ENCODE measurements at regions of chr12 and their contacts with region 1.

Region 1: DNA sequence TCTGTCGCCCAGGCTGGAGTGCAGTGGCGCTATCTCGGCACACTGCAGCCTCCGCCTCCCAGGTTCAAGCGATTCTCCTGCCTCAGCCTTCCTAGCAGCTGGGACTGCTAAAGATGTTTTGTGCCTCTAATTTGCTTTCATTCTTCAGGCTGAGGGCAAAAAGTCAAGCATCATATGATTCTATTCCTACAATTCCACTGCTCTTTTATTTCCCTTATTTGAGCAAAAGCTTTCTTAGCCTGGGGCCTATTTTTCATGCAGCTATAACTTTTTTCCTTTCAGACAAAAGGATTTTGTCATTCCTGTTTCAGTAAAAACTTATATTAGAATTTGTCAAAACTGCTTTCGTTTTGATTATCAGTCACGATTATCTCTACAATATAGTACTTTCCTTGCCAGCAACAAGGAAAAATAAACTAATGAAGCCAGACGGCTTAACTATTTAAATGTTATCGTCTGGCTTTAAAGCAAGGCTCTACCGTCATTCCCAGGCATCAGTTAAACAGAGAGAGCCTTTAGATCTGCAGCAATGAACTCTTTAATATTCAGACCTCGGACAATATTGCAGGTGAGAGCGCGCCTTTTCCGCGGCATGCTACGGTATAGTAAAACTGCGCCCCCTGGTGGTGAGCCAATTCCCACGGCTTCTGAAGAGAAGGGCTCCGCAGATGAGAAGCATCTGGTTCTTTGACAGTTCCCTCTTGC is 1.4 kb upstream of the SLC2A13 start:
- DNase-seq: peak; percentile 94
- H3K4me3 Mint-ChIP-seq: peak overlapping the region; percentile 53
- H3K27ac Mint-ChIP-seq: no peak overlapping the region
- H3K4me1 Mint-ChIP-seq: peaks cover 37% of the 10 kb centered on the region
- H3K27me3 Mint-ChIP-seq: no peaks in the 10 kb centered on the region

Region 2: DNA sequence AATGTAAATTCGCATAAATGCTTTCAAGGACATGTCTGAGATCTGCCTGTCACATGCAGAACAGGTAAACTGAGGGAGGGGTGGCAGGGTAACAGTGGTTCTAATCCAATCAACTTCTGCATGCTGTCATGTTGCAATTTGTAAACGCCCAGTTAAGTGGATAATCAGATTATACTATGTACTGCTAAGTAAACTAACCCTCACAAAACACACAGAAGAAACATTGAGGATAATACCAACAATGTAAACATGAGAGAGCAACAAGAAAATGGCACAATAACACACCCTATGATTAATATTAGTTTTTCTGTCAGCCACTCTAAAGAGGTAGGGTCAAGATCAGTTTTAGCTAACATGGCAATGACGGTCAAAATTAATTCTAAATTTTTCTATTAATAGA is 788.1 kb before region 1 on chr12:
- CTCF ChIA-PET with region 1: interaction called, 3 read pairs
- intact Hi-C with region 1: loop called (anchors 2 kb)
- DNase-seq: no peak
- H3K4me3 Mint-ChIP-seq: no peak overlapping the region
- H3K27ac Mint-ChIP-seq: no peak overlapping the region
- H3K4me1 Mint-ChIP-seq: no peaks in the 10 kb centered on the region
- H3K27me3 Mint-ChIP-seq: no peaks in the 10 kb centered on the region

Region 3: DNA sequence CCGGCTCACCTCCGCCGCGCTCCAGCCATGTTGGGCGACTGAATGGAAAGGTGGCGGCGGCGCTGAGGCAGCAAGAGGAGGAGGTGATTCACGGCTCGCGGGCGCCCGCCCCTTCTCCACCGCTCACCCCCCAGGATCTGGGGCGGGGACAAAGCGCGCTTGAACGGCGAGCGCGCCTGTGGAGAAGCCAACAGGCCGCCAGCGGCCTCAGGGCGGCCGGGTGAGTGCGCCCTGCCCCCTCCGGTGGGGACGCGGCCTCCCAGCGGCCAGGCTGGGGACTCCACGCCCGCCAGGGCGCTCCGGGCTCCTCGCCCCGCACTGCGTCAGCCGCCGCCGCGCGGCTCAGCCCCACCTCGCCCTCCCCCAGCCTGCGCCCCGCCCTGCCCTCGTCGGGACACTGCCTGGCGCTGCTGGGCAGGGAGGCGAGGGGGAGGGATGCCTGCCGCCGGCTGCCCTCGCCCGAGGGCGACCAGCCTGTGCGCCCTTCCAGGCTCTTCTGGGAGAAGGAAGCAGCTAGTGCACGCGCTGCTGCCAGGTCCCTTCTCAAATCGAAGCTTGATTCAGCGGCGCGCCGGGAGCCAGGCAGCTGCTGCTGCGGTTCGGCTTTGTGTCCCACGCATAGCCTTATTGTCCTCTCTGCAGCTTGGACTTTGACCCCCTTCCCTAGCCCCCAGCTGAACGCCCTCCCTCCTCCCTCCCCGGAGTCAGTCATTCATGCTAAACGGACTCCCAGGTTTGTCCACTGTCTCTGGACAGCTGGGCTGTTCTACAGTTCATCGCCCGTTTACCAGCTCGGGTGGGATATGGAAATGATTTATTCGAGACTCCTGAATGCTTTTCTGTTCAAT is 663.9 kb before region 1 on chr12 and contains the start of gene KIF21A:
- CTCF ChIA-PET with region 1: no interaction called
- intact Hi-C with region 1: loop called (anchors 2 kb)
- DNase-seq: peak; percentile 86
- H3K4me3 Mint-ChIP-seq: peak within 1 kb of the TSS; percentile 85
- H3K27ac Mint-ChIP-seq: peak within 1 kb of the TSS; percentile 85
- H3K4me1 Mint-ChIP-seq: peaks cover 14% of the 10 kb centered on the region
- H3K27me3 Mint-ChIP-seq: no peaks in the 10 kb centered on the region
- total RNA-seq, gene KIF21A: 21.4 to 22.0 TPM

Region 4: GRCh38 chr12:39628836-39629235 is 478.4 kb before region 1 on chr12:
- CTCF ChIA-PET with region 1: interaction called, 6 read pairs
- intact Hi-C with region 1: loop called (anchors 2 kb)
- DNase-seq: no peak
- H3K4me3 Mint-ChIP-seq: peak overlapping the region; percentile 44
- H3K27ac Mint-ChIP-seq: peak overlapping the region; percentile 93
- H3K4me1 Mint-ChIP-seq: peaks cover 54% of the 10 kb centered on the region
- H3K27me3 Mint-ChIP-seq: no peaks in the 10 kb centered on the region

Region 5: GRCh38 chr12:40010899-40011774 is 96.1 kb before region 1 on chr12:
- CTCF ChIA-PET with region 1: interaction called, 80 read pairs
- intact Hi-C with region 1: loop called (anchors 1 kb)
- DNase-seq: peak; percentile 69
- H3K4me3 Mint-ChIP-seq: peak overlapping the region; percentile 25
- H3K27ac Mint-ChIP-seq: no peak overlapping the region
- H3K4me1 Mint-ChIP-seq: peaks cover 16% of the 10 kb centered on the region
- H3K27me3 Mint-ChIP-seq: no peaks in the 10 kb centered on the region

Region 6: GRCh38 chr12:40137252-40137651 is 30.0 kb after region 1 on chr12:
- CTCF ChIA-PET with region 1: no interaction called
- intact Hi-C with region 1: loop called (anchors 1 kb)
- DNase-seq: peak; percentile 20
- H3K4me3 Mint-ChIP-seq: no peak overlapping the region
- H3K27ac Mint-ChIP-seq: no peak overlapping the region
- H3K4me1 Mint-ChIP-seq: peaks cover 7% of the 10 kb centered on the region
- H3K27me3 Mint-ChIP-seq: peaks cover 6% of the 10 kb centered on the region

Region 7: DNA sequence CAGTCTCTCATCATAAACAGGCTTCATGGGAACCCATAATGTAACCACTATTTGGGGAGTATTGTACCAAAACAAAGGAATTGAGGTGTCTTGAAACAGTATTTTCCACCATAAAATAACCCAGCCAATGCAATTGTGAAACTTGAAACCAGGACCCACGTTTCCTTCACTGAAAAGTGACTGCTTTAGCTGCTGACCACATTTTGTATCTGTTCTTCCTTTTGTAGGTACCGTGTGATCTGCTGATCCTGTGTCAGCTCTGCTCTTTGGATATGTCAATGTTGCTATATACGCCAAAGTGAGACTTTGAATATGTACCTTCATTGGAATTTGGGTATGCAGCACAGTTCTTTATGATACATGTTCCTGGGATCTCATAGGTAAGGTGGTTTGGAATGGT is 489.9 kb after region 1 on chr12:
- CTCF ChIA-PET with region 1: no interaction called
- intact Hi-C with region 1: no loop called
- DNase-seq: no peak
- H3K4me3 Mint-ChIP-seq: no peak overlapping the region
- H3K27ac Mint-ChIP-seq: no peak overlapping the region
- H3K4me1 Mint-ChIP-seq: no peaks in the 10 kb centered on the region
- H3K27me3 Mint-ChIP-seq: no peaks in the 10 kb centered on the region

Measured in activated naive CD4-positive, alpha-beta T cell treated with anti-CD3 and anti-CD28 coated beads for 36 hours (primary cell).